ENCODE measurements at regions of chr16 and their contacts with region 1.

Region 1: DNA sequence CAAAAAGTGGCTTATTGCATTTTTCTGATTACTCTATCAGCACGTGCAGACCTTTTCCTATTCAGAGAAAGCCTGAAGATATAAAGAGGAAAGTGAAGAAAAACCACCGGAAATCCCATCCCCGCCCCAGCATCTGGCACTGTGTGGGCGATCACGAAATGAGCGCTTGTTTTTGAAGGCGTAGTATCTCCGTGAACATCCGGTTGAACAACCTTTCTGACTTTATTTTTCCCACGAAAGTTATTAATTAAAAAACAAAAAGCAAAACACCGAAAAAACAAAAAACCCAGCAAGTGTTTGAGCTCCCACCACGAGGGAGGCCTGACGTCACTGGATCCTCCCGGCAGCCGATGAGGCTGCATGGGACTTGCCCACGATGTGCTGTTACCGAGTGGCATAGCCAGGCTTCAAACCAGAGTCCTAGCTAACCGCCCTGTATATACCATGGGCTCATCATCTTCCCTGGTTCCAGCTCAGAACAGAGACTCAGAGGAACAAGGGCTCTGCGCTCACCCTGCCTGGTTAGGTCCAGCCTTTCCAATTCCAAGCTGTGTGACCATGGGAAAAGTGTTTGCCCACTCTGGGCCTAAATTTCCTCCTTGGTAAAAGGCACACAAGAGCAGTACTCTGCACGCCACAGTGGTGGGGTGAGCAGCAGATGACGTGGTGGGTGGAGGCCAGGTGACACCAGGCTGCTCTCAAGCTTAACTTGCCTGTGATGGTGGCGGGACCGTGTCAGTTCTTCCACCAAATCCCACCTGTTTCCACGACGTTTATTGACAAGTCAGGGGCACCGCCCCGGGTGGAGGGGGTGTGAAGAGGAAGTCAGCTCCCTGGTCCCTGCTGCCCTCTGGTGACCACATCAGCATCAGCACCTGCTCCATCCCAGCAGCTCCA is 34.3 kb upstream of the IL21R start:
- DNase-seq: peak; percentile 91
- ATAC-seq: peak; percentile 85

Region 2: DNA sequence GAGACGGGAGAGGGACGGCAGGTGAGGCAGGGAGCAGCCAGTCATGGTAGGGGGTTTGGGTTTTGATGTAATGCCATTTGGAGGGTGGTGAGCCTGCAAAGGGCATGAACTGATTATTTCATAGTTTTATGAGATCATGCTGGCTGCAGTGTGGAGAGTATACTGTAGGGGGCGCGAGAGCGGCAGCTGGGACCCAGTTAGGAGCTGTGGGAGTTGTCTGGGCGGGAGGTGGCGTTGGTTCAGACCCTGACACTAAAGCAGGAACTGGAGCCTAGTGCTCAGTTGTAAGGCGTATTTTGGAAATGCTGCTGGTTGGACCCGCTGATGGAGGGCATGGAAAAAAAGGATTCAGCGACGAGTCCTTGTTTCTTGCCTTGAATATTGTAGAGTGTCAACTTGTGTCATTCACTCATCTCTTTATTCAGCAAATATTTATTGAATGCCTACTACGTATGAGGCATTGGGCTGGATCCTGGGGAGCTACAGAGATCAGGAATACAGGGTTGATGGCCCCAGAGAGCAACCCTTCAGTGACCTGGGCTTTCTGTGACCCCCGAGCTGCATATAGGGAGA is 188.1 kb before region 1 on chr16:
- intact Hi-C with region 1: loop called (anchors 2 kb)
- DNase-seq: peak; percentile 93
- ATAC-seq: peak; percentile 97

Region 3: DNA sequence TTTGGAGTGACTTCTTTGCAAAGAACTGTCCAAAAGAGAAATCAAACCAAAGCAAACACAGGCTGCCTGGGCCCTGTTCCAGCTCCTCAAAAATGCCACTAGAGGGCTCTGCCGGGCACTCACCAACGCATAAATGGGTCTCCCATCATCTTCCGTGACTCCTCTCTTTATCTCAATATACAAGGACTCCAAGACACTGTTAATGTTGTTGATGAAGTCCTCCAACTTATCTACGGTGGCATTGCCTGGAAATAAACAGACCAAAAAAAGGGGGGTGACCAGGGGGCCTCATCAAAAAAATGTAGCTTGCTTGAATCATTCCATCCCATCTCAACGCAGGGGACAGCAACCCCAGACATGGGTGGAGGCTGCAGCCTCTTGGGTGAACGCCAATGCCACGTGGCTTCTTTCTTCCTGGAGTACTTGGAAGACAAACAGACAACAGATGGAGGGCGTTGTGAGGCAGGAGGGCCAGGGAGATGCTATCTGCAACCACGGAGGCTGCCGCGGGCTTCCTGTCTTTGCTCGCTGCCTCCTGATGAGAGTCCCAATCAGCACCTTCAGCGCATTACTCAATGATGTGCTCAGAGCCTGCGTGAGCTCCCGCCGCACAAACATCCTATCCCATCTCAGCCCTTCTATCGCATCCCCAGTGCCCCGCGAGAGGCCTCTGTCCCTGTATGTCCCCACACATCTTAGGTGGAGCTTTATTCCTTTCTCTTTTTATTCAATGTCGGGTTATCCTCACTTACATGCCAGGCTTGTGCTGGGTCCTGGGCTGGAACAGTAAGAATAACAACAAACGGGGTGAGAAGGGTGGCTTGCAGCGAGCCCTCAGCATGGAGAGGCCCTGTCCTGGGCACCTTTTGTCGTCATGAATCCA is 132.4 kb before region 1 on chr16:
- intact Hi-C with region 1: loop called (anchors 2 kb)
- DNase-seq: peak; percentile 90
- ATAC-seq: peak; percentile 75

Region 4: GRCh38 chr16:27315277-27316037 is 52.3 kb before region 1 on chr16:
- intact Hi-C with region 1: loop called (anchors 5 kb)
- DNase-seq: peak; percentile 71
- ATAC-seq: peak; percentile 18

Region 5: DNA sequence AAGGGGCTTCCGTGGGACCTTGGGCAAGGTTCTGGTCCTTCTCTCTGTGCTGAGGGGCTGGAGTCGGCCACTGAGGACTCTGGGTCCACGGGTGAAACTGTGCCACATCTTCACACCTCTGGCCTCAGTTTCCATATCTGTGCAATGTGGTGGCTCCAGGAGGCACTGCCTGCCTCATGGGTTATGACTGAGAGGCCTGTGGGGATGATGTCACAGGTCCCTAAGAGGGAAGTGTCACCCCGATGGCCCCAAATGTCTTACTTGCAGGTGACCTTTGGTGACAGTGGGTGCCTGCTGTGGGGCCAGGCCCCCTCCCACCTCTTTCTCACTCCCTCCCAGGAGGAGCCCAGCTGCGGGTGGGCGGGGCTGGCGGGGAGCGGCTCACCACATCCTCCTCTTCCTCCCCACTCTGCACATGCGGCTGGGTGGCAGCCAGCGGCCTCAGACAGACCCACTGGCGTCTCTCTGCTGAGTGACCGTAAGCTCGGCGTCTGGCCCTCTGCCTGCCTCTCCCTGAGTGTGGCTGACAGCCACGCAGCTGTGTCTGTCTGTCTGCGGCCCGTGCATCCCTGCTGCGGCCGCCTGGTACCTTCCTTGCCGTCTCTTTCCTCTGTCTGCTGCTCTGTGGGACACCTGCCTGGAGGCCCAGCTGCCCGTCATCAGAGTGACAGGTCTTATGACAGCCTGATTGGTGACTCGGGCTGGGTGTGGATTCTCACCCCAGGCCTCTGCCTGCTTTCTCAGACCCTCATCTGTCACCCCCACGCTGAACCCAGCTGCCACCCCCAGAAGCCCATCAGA is 34.3 kb after region 1 on chr16 and contains the start of gene IL21R:
- intact Hi-C with region 1: no loop called
- DNase-seq: peak; percentile 89
- ATAC-seq: peak; percentile 74
- total RNA-seq, gene IL21R: 0.14 TPM

Measured in Right ventricle myocardium inferior (tissue), 1 donor.